Naive thymus-derived CD4-positive, alpha-beta T cell (primary cell): ENCODE measurements at regions of chr13 and their contacts with region 1.

Region 1: DNA sequence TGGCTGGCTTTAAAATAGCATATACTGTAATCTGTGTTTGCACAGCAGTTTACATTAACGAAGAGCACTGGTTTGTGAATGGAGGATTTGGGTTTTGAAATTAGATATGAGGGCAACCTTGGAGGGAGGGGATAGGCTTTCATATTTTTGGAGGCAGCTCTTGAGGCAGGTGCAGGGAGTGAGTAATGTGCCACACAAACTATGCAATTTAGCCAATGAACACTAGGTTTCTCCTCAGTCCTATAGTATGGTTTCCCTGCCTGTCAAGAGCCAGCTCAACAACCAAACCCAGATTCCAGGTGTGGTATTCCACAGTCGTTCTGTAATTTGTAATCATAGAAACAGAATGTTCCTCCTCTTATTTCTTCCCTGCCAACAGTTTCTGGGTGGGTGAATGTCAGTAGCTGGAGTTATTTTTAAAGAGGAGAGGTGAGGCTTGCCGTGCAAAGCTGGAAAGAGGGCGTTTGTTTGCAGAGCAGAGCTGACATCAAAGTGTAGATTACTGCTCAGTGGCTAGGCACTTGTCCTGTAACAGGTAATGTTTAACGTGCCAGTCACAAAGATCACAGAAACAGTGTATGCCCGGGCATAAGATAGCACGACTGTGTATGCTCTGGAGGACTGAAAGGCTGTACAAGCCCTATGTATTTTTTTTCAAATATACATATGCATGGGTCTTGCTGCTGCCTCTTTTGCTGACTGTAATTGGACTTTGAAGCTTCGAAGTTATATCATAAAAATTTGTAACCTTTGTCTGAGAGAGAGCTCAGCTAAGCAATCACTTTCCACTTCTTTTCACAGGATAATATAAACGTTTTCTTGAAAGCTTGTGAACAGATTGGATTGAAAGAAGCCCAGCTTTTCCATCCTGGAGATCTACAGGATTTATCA is 124.2 kb downstream of the LMO7 start:
- DNase-seq: peak in 7 of 9 donors; percentile 29 to 60 (median 46)
- ATAC-seq: peak; percentile 75
- H3K4me3 ChIP-seq: peak overlapping the region; percentile 65
- H3K4me3 Mint-ChIP-seq: peak overlapping the region; percentile 79 to 96 (median 92)
- H3K27ac ChIP-seq: peak overlapping the region; percentile 78
- H3K27ac Mint-ChIP-seq: peak overlapping the region; percentile 86 to 99 (median 96)
- H3K4me1 ChIP-seq: peaks cover 30 to 32% of the 10 kb centered on the region in 2 donors
- H3K4me1 Mint-ChIP-seq: peaks cover 37 to 72% (median 68%) of the 10 kb centered on the region in 7 donors
- H3K27me3 ChIP-seq: no peaks in the 10 kb centered on the region
- H3K27me3 Mint-ChIP-seq: no peaks in the 10 kb centered on the region

Region 2: GRCh38 chr13:75549262-75550158 is 210.9 kb before region 1 on chr13 and contains the start of gene UCHL3:
- CTCF ChIA-PET with region 1: no interaction called
- POLR2A ChIA-PET with region 1: no interaction called
- intact Hi-C with region 1: loop called (anchors 2 to 5 kb)
- DNase-seq: peak; percentile 94 to 99 (median 97)
- ATAC-seq: peak; percentile 97
- H3K4me3 ChIP-seq: peak within 1 kb of the TSS; percentile 95
- H3K4me3 Mint-ChIP-seq: peak within 1 kb of the TSS; percentile 91 to 99 (median 96)
- H3K27ac ChIP-seq: peak within 1 kb of the TSS; percentile 84
- H3K27ac Mint-ChIP-seq: peak within 1 kb of the TSS; percentile 94 to 99 (median 98)
- H3K4me1 ChIP-seq: peaks cover 15% of the 10 kb centered on the region in 2 donors
- H3K4me1 Mint-ChIP-seq: peaks cover 27 to 53% (median 46%) of the 10 kb centered on the region in 7 donors
- H3K27me3 ChIP-seq: no peaks in the 10 kb centered on the region
- H3K27me3 Mint-ChIP-seq: peaks cover 0 to 2% (median 0%) of the 10 kb centered on the region in 5 donors
- total RNA-seq, gene UCHL3: 18.6 to 35.8 (median 20.6) TPM

Region 3: GRCh38 chr13:75694722-75695121 is 65.7 kb before region 1 on chr13:
- CTCF ChIA-PET with region 1: interaction called, 19 read pairs
- POLR2A ChIA-PET with region 1: no interaction called
- intact Hi-C with region 1: loop called (anchors 1 to 5 kb)
- DNase-seq: no peak
- ATAC-seq: no peak
- H3K4me3 ChIP-seq: no peak overlapping the region
- H3K4me3 Mint-ChIP-seq: peak overlapping the region in 1 of 10 donors; percentile 1
- H3K27ac ChIP-seq: no peak overlapping the region
- H3K27ac Mint-ChIP-seq: no peak overlapping the region
- H3K4me1 ChIP-seq: no peaks in the 10 kb centered on the region
- H3K4me1 Mint-ChIP-seq: peaks cover 0 to 4% (median 0%) of the 10 kb centered on the region in 7 donors
- H3K27me3 ChIP-seq: no peaks in the 10 kb centered on the region
- H3K27me3 Mint-ChIP-seq: no peaks in the 10 kb centered on the region

Region 4: DNA sequence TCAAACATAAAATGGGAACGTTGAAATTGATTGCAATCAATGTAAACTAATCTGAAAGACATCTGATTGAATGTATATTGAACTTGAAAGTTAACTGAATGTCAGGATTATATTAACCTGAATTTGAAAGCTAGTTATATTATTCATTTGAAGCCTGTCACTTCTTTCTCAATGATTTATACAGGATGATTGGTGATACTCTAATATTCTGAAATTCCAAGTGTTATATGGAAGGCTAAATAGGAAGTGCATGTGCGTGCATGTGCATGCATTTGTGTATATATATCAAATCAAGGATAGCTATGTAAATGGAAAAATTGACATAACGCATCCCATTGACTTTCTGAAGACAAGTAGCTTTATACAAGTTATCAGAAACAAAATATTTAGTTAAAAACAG is 19.0 kb after region 1 on chr13:
- CTCF ChIA-PET with region 1: interaction called, 4 read pairs
- POLR2A ChIA-PET with region 1: interaction called, 4 read pairs
- intact Hi-C with region 1: loop called in 1 of 2 experiments (anchors 2 kb)
- DNase-seq: no peak
- ATAC-seq: no peak
- H3K4me3 ChIP-seq: no peak overlapping the region
- H3K4me3 Mint-ChIP-seq: no peak overlapping the region
- H3K27ac ChIP-seq: no peak overlapping the region
- H3K27ac Mint-ChIP-seq: peak overlapping the region in 1 of 9 donors; percentile 9
- H3K4me1 ChIP-seq: no peaks in the 10 kb centered on the region
- H3K4me1 Mint-ChIP-seq: peaks cover 0 to 24% (median 13%) of the 10 kb centered on the region in 7 donors
- H3K27me3 ChIP-seq: no peaks in the 10 kb centered on the region
- H3K27me3 Mint-ChIP-seq: no peaks in the 10 kb centered on the region

Region 5: GRCh38 chr13:75870397-75870903 is 110.1 kb after region 1 on chr13:
- CTCF ChIA-PET with region 1: interaction called, 13 read pairs
- POLR2A ChIA-PET with region 1: interaction called, 4 read pairs
- intact Hi-C with region 1: loop called (anchors 1 to 2 kb)
- DNase-seq: peak in 6 of 9 donors; percentile 12 to 61 (median 38)
- ATAC-seq: peak; percentile 75
- H3K4me3 ChIP-seq: peak overlapping the region; percentile 50
- H3K4me3 Mint-ChIP-seq: peak overlapping the region; percentile 60 to 85 (median 80)
- H3K27ac ChIP-seq: peak overlapping the region; percentile 52
- H3K27ac Mint-ChIP-seq: peak overlapping the region; percentile 72 to 92 (median 86)
- H3K4me1 ChIP-seq: peaks cover 0 to 13% of the 10 kb centered on the region in 2 donors
- H3K4me1 Mint-ChIP-seq: peaks cover 4 to 29% (median 19%) of the 10 kb centered on the region in 7 donors
- H3K27me3 ChIP-seq: no peaks in the 10 kb centered on the region
- H3K27me3 Mint-ChIP-seq: peaks cover 0 to 13% (median 3%) of the 10 kb centered on the region in 5 donors

Region 6: GRCh38 chr13:76991796-76992547 is 1231.6 kb after region 1 on chr13 and contains the start of gene CLN5:
- CTCF ChIA-PET with region 1: no interaction called
- POLR2A ChIA-PET with region 1: interaction called, 12 read pairs
- intact Hi-C with region 1: loop called in 1 of 2 experiments (anchors 5 kb)
- DNase-seq: peak; percentile 93 to 98 (median 96)
- ATAC-seq: peak; percentile 92
- H3K4me3 ChIP-seq: peak within 1 kb of the TSS; percentile 87
- H3K4me3 Mint-ChIP-seq: peak within 1 kb of the TSS; percentile 88 to 99 (median 96)
- H3K27ac ChIP-seq: peak within 1 kb of the TSS; percentile 96
- H3K27ac Mint-ChIP-seq: peak within 1 kb of the TSS; percentile 96 to 99 (median 99)
- H3K4me1 ChIP-seq: peaks cover 12 to 19% of the 10 kb centered on the region in 2 donors
- H3K4me1 Mint-ChIP-seq: peaks cover 27 to 59% (median 53%) of the 10 kb centered on the region in 7 donors
- H3K27me3 ChIP-seq: peaks cover 0 to 3% of the 10 kb centered on the region in 2 donors
- H3K27me3 Mint-ChIP-seq: peaks cover 0 to 12% (median 0%) of the 10 kb centered on the region in 5 donors
- total RNA-seq, gene CLN5: 18.9 to 45.3 (median 27.7) TPM